K562 (cell line): ENCODE measurements at regions of chr2 and their contacts with region 1.

Region 1: DNA sequence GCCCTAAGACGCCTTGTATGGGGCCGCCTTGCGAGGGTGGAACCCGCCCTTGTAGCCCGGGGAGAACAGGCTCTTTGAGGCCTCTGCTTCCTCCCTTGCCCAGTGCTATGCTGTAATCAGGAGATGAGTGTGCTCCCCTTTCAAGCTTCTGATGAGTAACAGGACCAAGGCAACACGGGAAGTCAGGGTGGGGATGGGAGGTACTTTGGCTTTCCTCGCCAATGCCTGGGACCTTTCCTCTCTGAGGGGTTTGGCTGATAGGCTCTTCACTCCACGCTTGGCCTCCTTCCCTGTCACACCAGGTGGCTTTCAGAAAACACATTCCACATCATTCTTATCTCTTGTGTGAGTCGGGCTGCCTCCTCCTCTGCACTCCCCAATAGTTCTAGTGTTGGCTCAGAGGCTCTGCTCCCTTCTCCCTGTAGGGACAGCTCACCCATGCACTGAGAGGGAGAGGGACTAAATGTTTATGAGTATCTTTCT is 223.7 kb upstream of the TRIB2 start:
- DNase-seq: peak; percentile 67 to 94 (median 78)
- ATAC-seq: peak; percentile 96
- H3K4me3 ChIP-seq: no peak overlapping the region
- H3K27ac ChIP-seq: peak overlapping the region; percentile 58; the same call in 2 of the 3 replicates
- H3K4me1 ChIP-seq: peaks cover 6 to 10% of the 10 kb centered on the region in 2 experiments; a peak in 3 of 5 replicates
- H3K27me3 ChIP-seq: no peaks in the 10 kb centered on the region
- CTCF ChIP-seq: no peak
- EP300 ChIP-seq: 0 out of 2 replicates have a peak, but pooled peaks have one; percentile 24
- POLR2A ChIP-seq: peak; percentile 63
- RAD21 ChIP-seq: peak in 1 of 2 experiments; percentile 15; a peak in 2 of 4 replicates

Region 2: DNA sequence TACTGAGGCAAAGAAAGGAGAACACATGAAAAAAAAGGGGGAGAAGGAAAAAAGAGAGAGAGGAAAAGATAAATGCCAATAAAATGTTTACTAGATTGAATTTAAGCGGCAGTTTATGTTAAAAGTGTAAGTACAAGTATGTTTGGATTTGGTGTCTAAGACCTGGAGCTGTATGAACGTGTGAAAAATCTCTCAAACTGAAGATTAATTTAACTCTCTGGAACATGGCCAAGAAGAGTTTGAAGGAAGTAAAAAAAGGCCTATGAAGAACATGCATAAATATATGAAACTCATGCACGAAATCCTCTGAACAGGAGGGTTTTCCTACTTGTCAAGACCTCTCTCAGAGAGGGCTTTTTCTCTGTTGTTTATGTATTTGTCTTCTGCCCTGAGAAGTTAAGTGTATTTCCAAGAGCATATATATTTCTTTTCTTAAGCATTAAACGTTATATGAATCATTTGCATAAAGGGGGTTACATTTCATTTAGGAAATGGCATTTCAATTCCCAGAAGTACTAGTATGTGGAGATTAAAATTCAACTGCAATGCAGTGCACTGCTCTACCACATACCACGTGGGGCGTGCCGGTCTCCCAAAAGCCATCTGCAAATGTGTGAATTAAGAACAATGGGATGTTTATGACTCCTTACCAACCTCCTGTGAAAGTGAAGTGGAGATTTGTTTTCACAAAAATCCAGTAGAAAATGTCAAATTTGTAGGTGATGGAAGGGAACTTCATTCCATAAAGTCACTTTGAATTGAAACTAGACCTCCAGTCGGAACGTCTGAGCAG is 57.4 kb before region 1 on chr2:
- CTCF ChIA-PET with region 1: no interaction called
- POLR2A ChIA-PET with region 1: no interaction called
- in situ Hi-C with region 1: no loop called
- intact Hi-C with region 1: loop called (anchors 2 kb)
- DNase-seq: peak in 2 of 4 experiments; percentile 21 to 31
- ATAC-seq: peak; percentile 56; the same call in 2 of the 3 replicates
- H3K4me3 ChIP-seq: no peak overlapping the region
- H3K27ac ChIP-seq: peak overlapping the region; percentile 48
- H3K4me1 ChIP-seq: peaks cover 14 to 41% of the 10 kb centered on the region in 2 experiments
- H3K27me3 ChIP-seq: no peaks in the 10 kb centered on the region
- CTCF ChIP-seq: no peak
- EP300 ChIP-seq: no peak
- POLR2A ChIP-seq: no peak
- RAD21 ChIP-seq: no peak